ENCODE measurements at regions of chr2 and their contacts with region 1.

Region 1: GRCh38 chr2:33015421-33016142 is 68.8 kb downstream of the LTBP1 start:
- DNase-seq: no peak
- ATAC-seq: peak; percentile 50 to 93 (median 84)
- H3K4me3 ChIP-seq: no peak overlapping the region
- H3K27ac ChIP-seq: peak overlapping the region in 9 of 10 donors; percentile 29 to 86 (median 63)
- H3K4me1 ChIP-seq: peaks cover 0 to 42% (median 18%) of the 10 kb centered on the region in 9 donors
- H3K27me3 ChIP-seq: no peaks in the 10 kb centered on the region
- CTCF ChIP-seq: no peak

Region 2: GRCh38 chr2:32963941-32964340 is 51.6 kb before region 1 on chr2:
- intact Hi-C with region 1: loop called in 5 of 10 experiments (anchors 5 to 10 kb)
- DNase-seq: no peak
- ATAC-seq: peak in 2 of 8 donors; percentile 61 to 62
- H3K4me3 ChIP-seq: no peak overlapping the region
- H3K27ac ChIP-seq: peak overlapping the region in 1 of 10 donors; percentile 31
- H3K4me1 ChIP-seq: peaks cover 0 to 54% (median 29%) of the 10 kb centered on the region in 9 donors
- H3K27me3 ChIP-seq: no peaks in the 10 kb centered on the region
- CTCF ChIP-seq: no peak

Measured in heart right ventricle (tissue), 16 donors.